Upper lobe of right lung (tissue), 1 donor: ENCODE measurements at regions of chr6 and their contacts with region 1.

Region 1: GRCh38 chr6:31441365-31442267 is 38.2 kb downstream of the MICA start:
- DNase-seq: peak; percentile 94
- ATAC-seq: peak; percentile 100
- H3K4me3 ChIP-seq: no peak overlapping the region
- H3K27ac ChIP-seq: no peak overlapping the region
- H3K4me1 ChIP-seq: no peaks in the 10 kb centered on the region
- H3K27me3 ChIP-seq: no peaks in the 10 kb centered on the region
- CTCF ChIP-seq: peak; percentile 87

Region 2: GRCh38 chr6:31068669-31069340 is 372.8 kb before region 1 on chr6:
- intact Hi-C with region 1: no loop called
- DNase-seq: peak; percentile 85
- ATAC-seq: peak; percentile 97
- H3K4me3 ChIP-seq: no peak overlapping the region
- H3K27ac ChIP-seq: no peak overlapping the region
- H3K4me1 ChIP-seq: peaks cover 8% of the 10 kb centered on the region
- H3K27me3 ChIP-seq: no peaks in the 10 kb centered on the region
- CTCF ChIP-seq: peak; percentile 97

Region 3: GRCh38 chr6:31225735-31226134 is 215.9 kb before region 1 on chr6:
- intact Hi-C with region 1: no loop called
- DNase-seq: no peak
- ATAC-seq: no peak
- H3K4me3 ChIP-seq: no peak overlapping the region
- H3K27ac ChIP-seq: no peak overlapping the region
- H3K4me1 ChIP-seq: no peaks in the 10 kb centered on the region
- H3K27me3 ChIP-seq: no peaks in the 10 kb centered on the region
- CTCF ChIP-seq: no peak

Region 4: DNA sequence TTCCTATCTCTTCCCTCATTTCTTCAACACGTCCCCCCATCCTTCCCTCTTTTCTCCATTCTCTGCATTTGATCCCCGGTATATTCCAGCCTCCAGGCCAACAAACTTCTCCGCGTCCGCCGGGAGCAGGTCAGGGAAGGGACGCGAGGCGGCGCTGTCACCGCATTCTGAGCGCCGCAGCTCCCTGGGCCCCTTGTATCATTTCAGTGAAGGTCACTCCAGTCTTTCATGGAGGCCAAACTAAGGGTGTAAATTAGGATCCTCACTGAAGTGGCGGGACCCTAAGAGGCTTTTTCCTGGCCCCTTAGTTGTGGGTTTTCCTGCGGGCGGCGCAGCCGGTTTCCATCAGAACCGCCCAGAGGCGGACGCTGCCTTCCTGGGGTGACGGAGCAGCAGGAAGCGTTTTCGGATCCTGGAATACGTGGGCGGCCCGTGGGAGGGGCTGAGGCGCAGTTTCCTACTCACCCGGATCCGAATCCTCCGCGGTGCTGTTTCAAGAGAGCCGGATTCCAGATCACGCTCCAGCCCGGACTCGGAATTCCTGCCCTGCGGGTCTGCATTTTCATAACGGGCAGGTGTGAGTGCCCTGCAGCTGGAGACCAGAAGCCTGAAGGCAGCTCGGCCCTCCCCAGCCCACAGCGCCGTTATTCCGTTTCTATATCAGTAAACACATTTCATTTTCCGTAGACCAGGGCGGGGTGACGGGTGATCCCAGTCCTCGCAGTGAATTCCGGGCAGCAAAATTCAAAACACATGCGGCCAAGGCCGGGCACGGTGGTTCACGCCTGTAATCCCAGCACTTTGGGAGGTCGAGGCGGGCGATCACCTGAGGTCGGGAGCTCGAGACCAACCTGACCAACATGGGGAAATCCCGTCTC is 41.8 kb before region 1 on chr6:
- intact Hi-C with region 1: loop called (anchors 5 kb)
- DNase-seq: peak; percentile 97
- ATAC-seq: peak; percentile 79
- H3K4me3 ChIP-seq: peak overlapping the region; percentile 96
- H3K27ac ChIP-seq: peak overlapping the region; percentile 99
- H3K4me1 ChIP-seq: peaks cover 50% of the 10 kb centered on the region
- H3K27me3 ChIP-seq: no peaks in the 10 kb centered on the region
- CTCF ChIP-seq: peak; percentile 94